Heart left ventricle (tissue), 16 donors: ENCODE measurements at regions of chr2 and their contacts with region 1.

Region 1: GRCh38 chr2:33577668-33578067 is 21.4 kb downstream of the FAM98A start:
- DNase-seq: no peak
- ATAC-seq: no peak
- H3K4me3 ChIP-seq: no peak overlapping the region
- H3K27ac ChIP-seq: no peak overlapping the region
- H3K4me1 ChIP-seq: peaks cover 0 to 14% (median under 1%) of the 10 kb centered on the region in 12 donors
- H3K27me3 ChIP-seq: no peaks in the 10 kb centered on the region
- CTCF ChIP-seq: no peak
- POLR2A ChIP-seq: no peak

Region 2: GRCh38 chr2:33457556-33458247 is 120.0 kb before region 1 on chr2:
- intact Hi-C with region 1: loop called in 1 of 10 experiments (anchors 10 kb)
- DNase-seq: peak in 4 of 5 donors; percentile 61 to 65 (median 64)
- ATAC-seq: peak; percentile 92 to 95 (median 94)
- H3K4me3 ChIP-seq: peak overlapping the region; percentile 12 to 57 (median 45)
- H3K27ac ChIP-seq: peak overlapping the region; percentile 51 to 88 (median 78)
- H3K4me1 ChIP-seq: peaks cover 0 to 31% (median 9%) of the 10 kb centered on the region in 12 donors
- H3K27me3 ChIP-seq: no peaks in the 10 kb centered on the region
- CTCF ChIP-seq: no peak
- POLR2A ChIP-seq: no peak